Cardiac septum (tissue), 1 donor: ENCODE measurements at regions of chr4 and their contacts with region 1.

Region 1: DNA sequence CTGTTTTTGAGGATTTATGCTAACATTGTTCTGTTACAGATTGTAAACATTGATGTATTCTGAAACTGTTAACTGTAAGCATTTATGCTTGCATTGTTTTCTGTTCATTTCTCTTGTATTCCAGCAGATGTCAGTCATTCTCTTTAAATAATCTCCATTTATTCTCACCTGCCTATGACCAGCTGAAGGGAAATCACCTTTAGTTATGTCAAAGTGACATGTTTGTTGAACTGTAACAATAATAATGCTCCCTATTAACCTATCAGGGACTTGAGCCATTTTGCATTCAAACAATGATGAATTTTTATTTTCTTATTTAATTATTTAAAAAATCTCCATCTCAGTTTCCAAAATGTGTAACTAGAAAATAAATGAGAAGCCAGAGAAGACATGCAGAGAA is 58.0 kb downstream of the SPCS3 start:
- DNase-seq: no peak

Region 2: DNA sequence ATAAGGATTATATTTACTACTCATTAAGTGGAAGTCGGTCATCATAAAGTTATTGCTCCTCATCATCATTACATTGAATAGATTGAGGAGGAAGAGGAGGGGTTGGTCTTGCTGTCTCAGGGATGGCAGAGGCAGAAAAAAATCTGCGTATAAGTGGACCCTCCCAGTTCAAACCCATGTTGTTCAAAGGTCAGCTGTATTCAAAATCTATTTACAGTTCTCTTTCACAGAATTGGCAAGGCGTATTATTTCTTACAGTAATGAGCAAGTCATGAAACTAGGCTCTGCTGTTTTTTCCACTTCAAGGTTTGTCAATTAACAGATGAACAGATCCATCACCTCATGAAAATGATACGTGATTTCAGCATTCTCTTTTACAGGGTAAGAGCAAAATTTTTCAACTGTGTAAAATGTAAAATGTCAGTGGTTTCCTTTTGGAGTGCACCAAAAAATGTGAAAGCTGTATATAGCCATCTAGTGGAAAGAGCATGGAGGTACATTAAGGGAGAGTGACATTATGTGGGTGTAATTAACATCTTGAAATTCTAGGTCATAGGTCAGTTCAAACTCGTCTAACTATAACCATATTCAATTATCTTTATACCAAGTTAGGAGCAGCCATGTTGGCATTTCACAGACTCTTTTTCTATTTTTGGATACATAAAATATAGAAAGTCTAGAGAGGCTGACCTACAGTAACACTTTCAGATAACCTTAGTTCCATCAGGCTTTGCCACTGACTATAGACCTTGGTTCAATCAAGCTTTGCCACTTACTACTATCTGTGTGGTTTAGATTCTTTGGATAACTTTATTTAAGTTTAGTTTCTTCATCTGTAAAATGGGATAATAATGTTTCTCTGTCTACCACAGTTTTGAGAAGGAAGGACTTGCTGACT is 961.9 kb after region 1 on chr4:
- intact Hi-C with region 1: loop called (anchors 10 kb)
- DNase-seq: no peak